G401 (cell line): ENCODE measurements at regions of chr3 and their contacts with region 1.

Region 1: GRCh38 chr3:85881833-85882393 is 923.1 kb downstream of the CADM2 start:
- DNase-seq: peak; percentile 90

Region 2: DNA sequence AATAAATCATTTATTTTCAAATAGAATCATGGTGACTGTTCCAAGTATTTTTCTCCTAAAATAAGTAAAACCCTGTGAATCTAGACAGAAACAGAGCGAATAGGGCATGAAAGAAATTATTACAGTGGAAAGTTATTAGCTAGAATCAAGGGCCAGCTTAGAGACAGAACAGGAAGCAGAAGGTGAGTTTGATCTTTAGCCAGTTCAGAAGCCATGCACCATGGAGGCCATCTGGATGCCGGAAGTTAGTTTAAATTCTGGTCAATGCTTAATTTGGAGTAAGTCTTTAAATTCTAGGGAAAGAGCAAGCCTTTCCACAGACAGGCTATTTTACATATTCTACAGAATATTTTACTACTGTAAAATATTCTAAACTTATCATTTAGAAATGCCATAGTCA is 348.3 kb before region 1 on chr3:
- in situ Hi-C with region 1: no loop called
- DNase-seq: peak; percentile 96

Region 3: GRCh38 chr3:85838921-85839320 is 43.0 kb before region 1 on chr3:
- in situ Hi-C with region 1: loop called (anchors 5 kb)
- DNase-seq: no peak